ENCODE measurements at regions of chr3 and their contacts with region 1.

Region 1: GRCh38 chr3:110384601-110385000 is 687.0 kb upstream of the NECTIN3 start:
- DNase-seq: peak; percentile 81
- ATAC-seq: peak; percentile 89
- H3K4me3 ChIP-seq: no peak overlapping the region
- H3K27ac ChIP-seq: no peak overlapping the region; the same call in 1 of the 2 replicates
- H3K4me1 ChIP-seq: peaks cover 8% of the 10 kb centered on the region
- H3K27me3 ChIP-seq: no peaks in the 10 kb centered on the region
- CTCF ChIP-seq: no peak

Region 2: DNA sequence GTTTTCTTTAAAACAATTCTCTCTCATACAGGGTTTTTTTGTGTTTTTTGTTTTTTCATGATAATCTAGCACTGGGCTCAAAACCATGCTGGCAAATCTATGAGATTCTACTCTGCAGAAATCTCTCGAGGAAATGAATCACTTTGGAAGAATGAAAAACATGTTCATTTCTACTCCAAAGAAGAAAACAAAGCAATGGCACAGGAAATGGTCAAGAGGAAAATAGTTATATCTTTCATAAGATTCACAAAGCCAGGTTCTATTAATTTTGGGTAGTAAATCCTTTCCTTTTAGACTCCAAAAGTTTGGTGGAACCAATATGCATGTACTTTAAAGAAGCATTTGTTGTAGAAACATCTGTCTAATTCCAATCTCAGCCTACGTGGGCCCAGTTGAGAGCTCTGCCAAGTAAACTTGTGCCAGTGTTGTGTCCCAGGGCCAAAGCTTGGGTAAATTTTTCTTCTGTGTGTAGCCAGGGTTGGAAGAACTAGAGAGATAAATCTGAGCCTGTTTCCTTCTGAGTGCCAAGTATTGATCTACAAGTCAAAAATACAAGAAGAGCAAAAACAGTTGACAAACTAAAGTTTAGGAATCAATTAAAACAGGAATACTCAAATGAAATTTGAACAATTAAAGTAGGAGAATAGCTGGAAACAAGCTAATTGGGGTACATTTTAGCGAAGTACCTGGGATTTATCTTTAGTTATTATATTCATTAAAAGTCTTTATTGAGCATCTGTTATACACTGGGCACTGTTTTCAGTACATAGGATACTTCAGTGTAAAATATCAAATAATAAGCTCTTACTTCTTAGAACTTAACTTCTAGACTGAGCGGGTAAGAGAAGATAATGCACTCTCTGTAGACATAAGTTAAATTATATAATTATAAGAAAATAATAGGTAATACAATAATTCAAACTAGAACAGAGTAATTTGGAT is 29.5 kb after region 1 on chr3:
- CTCF ChIA-PET with region 1: no interaction called
- POLR2A ChIA-PET with region 1: no interaction called
- intact Hi-C with region 1: loop called (anchors 2 kb)
- DNase-seq: peak; percentile 70
- ATAC-seq: peak; percentile 56
- H3K4me3 ChIP-seq: no peak overlapping the region
- H3K27ac ChIP-seq: peak overlapping the region; percentile 63
- H3K4me1 ChIP-seq: peaks cover 26% of the 10 kb centered on the region
- H3K27me3 ChIP-seq: no peaks in the 10 kb centered on the region
- CTCF ChIP-seq: no peak

Region 3: DNA sequence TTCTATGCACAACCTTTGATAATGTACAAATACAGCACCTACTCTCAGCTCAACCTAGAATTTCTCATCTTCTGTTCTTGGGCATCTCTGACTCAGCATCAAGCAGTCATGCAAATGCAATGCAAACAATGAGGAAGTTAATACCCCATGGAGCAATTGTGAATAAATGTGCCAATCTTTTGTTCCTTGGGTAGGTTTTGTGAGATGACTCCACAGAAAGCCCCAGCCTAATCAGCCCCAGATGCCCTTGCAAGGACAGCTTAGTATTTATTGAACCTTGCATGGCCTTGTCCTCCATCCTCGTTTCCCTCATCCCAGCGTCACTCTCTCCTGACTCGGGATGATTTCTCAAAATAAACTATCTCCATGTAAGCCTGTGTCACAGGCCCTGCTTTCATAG is 192.4 kb after region 1 on chr3:
- CTCF ChIA-PET with region 1: no interaction called
- POLR2A ChIA-PET with region 1: no interaction called
- intact Hi-C with region 1: loop called (anchors 5 kb)
- DNase-seq: peak; percentile 95
- ATAC-seq: peak; percentile 94
- H3K4me3 ChIP-seq: no peak overlapping the region
- H3K27ac ChIP-seq: peak overlapping the region; percentile 52
- H3K4me1 ChIP-seq: peaks cover 29% of the 10 kb centered on the region
- H3K27me3 ChIP-seq: no peaks in the 10 kb centered on the region
- CTCF ChIP-seq: no peak

Region 4: DNA sequence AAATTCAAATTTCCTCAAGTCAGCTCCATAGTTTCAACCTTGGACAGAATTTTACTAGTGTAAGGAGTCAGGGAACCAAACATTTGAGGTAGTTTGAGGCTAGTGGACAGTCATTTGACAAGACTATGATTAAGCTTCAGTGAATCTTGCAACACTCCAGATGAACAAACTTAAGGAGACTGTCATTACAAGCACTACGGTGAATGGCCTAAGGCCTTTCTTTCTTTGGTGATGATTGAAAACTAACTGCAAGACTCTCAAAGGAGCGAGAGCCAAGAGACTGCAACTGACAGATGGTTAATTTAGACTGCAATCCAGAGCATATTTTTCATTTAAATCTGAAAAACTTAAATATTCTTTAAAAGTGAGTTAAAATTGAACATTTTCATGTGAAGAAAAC is 414.7 kb after region 1 on chr3:
- CTCF ChIA-PET with region 1: no interaction called
- POLR2A ChIA-PET with region 1: no interaction called
- intact Hi-C with region 1: loop called (anchors 10 kb)
- DNase-seq: peak; percentile 19
- ATAC-seq: no peak
- H3K4me3 ChIP-seq: no peak overlapping the region
- H3K27ac ChIP-seq: no peak overlapping the region
- H3K4me1 ChIP-seq: no peaks in the 10 kb centered on the region
- H3K27me3 ChIP-seq: no peaks in the 10 kb centered on the region
- CTCF ChIP-seq: no peak